ENCODE measurements at regions of chr10 and their contacts with region 1.

Region 1: GRCh38 chr10:89563861-89564478 is 28.6 kb upstream of the SLC16A12 start:
- H3K4me3 Mint-ChIP-seq: no peak overlapping the region
- H3K27ac Mint-ChIP-seq: no peak overlapping the region
- H3K4me1 Mint-ChIP-seq: no peaks in the 10 kb centered on the region
- H3K27me3 Mint-ChIP-seq: peaks cover 13% of the 10 kb centered on the region

Region 2: GRCh38 chr10:89217057-89217990 is 346.6 kb before region 1 on chr10:
- intact Hi-C with region 1: loop called (anchors 2 kb)
- H3K4me3 Mint-ChIP-seq: no peak overlapping the region
- H3K27ac Mint-ChIP-seq: no peak overlapping the region
- H3K4me1 Mint-ChIP-seq: peaks cover 25% of the 10 kb centered on the region
- H3K27me3 Mint-ChIP-seq: peaks cover 1% of the 10 kb centered on the region

Region 3: DNA sequence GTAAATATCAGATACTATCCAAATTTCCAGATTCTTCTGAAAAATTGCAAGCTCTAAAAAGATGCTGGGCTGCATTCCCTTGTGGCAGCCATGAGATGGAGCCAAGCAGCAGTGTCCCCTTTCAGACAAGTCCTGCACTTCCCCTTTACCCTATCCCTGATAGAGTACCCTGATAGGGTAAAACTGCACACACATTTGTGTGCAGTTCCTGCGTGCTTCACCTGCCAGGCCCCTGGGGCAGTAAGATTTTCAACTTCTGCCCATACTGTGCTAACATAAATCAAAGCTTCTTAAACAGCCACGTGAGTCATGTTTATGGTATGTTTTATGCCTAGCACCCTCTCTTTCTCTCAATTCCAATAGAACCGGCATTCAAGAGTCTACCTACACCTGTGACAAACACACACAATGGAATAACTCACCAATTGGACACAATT is 97.4 kb before region 1 on chr10:
- intact Hi-C with region 1: loop called (anchors 2 kb)
- H3K4me3 Mint-ChIP-seq: no peak overlapping the region
- H3K27ac Mint-ChIP-seq: no peak overlapping the region
- H3K4me1 Mint-ChIP-seq: peaks cover 15% of the 10 kb centered on the region
- H3K27me3 Mint-ChIP-seq: no peaks in the 10 kb centered on the region